ENCODE measurements at regions of chrX and their contacts with region 1.

Region 1: GRCh38 chrX:119482481-119483480 is 14.5 kb downstream of the SLC25A5 start:
- DNase-seq: peak; percentile 75
- ATAC-seq: peak; percentile 95
- H3K4me3 Mint-ChIP-seq: peak overlapping the region; percentile 42
- H3K27ac Mint-ChIP-seq: peak overlapping the region; percentile 67
- H3K4me1 Mint-ChIP-seq: peaks cover 11% of the 10 kb centered on the region
- H3K27me3 Mint-ChIP-seq: no peaks in the 10 kb centered on the region

Region 2: DNA sequence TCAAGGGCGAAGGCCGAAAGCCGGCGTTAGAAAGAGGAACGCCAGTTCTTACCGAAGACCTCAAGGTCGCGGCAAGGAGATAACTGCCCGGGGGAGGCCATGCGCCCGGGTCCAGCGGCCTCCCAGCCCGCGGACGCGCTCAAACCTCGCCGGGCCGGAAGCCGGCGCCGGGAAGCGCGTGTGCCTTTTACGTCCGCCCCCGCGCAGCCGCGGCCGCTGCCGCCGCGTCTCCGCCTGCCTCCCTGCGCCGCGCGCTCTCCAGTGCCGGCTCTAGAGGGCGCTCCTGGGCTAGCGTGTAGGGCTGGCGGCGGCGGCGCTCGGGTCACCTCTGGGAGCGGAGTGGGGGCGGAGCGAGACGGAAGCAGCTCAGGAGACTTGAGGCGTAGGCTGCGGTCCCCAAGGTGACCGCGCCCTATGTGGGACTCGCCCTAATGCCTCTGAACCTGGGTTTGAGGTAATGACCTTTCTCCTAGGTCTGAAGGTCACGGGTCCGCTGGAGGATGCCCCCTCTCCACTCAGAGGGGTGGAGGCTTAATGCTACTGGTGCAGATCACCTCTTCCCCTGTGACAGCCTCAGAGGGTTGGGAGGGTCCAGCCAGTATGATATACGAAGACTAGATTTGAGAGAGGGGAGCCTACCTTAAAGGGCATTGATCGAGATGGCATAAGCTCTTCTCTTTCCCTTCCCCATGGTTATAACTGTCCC is 13.7 kb before region 1 on chrX:
- CTCF ChIA-PET with region 1: interaction called, 10 read pairs
- DNase-seq: peak; percentile 92
- ATAC-seq: peak; percentile 72
- H3K4me3 Mint-ChIP-seq: peak overlapping the region; percentile 87
- H3K27ac Mint-ChIP-seq: peak overlapping the region; percentile 93
- H3K4me1 Mint-ChIP-seq: peaks cover 25% of the 10 kb centered on the region
- H3K27me3 Mint-ChIP-seq: no peaks in the 10 kb centered on the region

Region 3: GRCh38 chrX:119516157-119516702 is 33.4 kb after region 1 on chrX:
- CTCF ChIA-PET with region 1: interaction called, 10 read pairs
- DNase-seq: peak; percentile 54
- ATAC-seq: peak; percentile 98
- H3K4me3 Mint-ChIP-seq: no peak overlapping the region
- H3K27ac Mint-ChIP-seq: peak overlapping the region; percentile 47
- H3K4me1 Mint-ChIP-seq: peaks cover 6% of the 10 kb centered on the region
- H3K27me3 Mint-ChIP-seq: no peaks in the 10 kb centered on the region